Gastrocnemius medialis (tissue), 4 donors: ENCODE measurements at regions of chr3 and their contacts with region 1.

Region 1: GRCh38 chr3:70531063-70531657 is 218.7 kb upstream of the MDFIC2 start:
- DNase-seq: no peak
- ATAC-seq: no peak
- H3K4me3 ChIP-seq: no peak overlapping the region
- H3K27ac ChIP-seq: no peak overlapping the region
- H3K4me1 ChIP-seq: no peaks in the 10 kb centered on the region
- H3K27me3 ChIP-seq: no peaks in the 10 kb centered on the region
- CTCF ChIP-seq: peak in 3 of 5 experiments; percentile 13 to 45 (median 37)
- POLR2A ChIP-seq: no peak

Region 2: DNA sequence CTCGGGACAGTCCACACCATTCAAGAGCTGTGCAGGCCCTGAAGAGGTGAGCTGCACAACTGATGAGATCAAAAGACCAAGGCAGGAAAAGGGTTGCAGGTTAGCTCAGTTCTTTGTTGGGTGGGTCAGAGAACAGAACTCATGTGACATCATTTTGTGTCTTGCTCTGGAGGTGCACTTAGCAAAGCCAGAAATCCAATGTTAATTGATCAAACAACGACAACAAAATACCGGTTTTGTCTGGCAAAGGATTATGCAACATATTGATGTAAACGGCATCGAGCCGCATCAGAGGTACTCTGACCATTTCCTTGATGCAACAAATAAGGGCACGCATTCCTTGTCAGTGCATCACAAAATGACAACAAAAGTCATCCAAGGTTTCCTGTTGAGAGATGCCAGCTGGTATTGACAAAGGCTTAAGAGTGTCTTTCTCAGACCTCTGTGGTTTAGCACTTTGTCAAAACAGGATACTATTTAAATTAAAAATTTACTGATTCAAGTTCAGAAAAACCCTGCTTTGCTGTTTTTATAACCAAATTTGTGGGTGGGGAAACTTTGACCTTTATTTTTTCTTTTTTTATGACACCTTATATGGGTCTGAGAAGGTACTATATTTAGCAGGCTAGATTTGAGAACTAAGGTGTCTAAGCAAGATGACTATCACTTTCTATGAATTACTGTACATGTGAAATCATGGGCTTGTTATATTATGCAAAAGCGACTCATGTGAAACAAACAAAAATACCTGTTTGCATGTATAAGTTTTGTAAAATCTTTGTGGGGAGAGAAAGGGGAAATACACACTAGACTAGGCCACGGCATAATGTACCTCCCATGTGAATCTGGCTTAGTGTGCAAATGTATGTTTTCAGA is 556.2 kb after region 1 on chr3:
- in situ Hi-C with region 1: loop called in 1 of 4 experiments (anchors 25 kb)
- intact Hi-C with region 1: no loop called
- DNase-seq: no peak
- ATAC-seq: no peak
- H3K4me3 ChIP-seq: no peak overlapping the region
- H3K27ac ChIP-seq: no peak overlapping the region
- H3K4me1 ChIP-seq: no peaks in the 10 kb centered on the region
- H3K27me3 ChIP-seq: no peaks in the 10 kb centered on the region
- CTCF ChIP-seq: no peak
- POLR2A ChIP-seq: no peak

Region 3: DNA sequence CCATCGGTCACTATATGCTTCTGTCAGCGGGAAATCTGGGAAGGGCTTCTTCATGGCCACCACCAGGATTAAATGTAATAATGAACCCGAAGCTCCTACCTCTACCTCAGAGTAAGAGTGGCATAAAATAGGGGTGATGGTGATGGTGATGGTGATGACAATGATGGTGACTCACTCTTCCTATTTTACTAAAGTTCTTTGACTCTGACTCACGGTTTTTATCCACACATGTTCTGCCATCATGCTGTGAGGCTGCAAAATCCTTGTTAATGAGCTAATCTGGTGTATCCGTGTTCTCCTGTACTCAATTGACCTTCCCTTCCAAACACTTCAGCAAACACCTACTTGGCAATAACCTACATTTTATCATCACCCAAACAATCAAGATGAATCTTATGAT is 1070.7 kb after region 1 on chr3:
- in situ Hi-C with region 1: loop called in 3 of 4 experiments (anchors 25 kb)
- intact Hi-C with region 1: no loop called
- DNase-seq: no peak
- ATAC-seq: no peak
- H3K4me3 ChIP-seq: no peak overlapping the region
- H3K27ac ChIP-seq: no peak overlapping the region
- H3K4me1 ChIP-seq: no peaks in the 10 kb centered on the region
- H3K27me3 ChIP-seq: no peaks in the 10 kb centered on the region
- CTCF ChIP-seq: no peak
- POLR2A ChIP-seq: no peak